Gastrocnemius medialis (tissue), 4 donors: ENCODE measurements at regions of chr16 and their contacts with region 1.

Region 1: GRCh38 chr16:10918294-10919002 is 23.8 kb downstream of the DEXI start:
- DNase-seq: peak; percentile 89 to 96
- ATAC-seq: peak; percentile 39 to 51
- H3K4me3 ChIP-seq: no peak overlapping the region
- H3K27ac ChIP-seq: peak overlapping the region; percentile 92 to 94 (median 93)
- H3K4me1 ChIP-seq: peaks cover 40 to 45% of the 10 kb centered on the region in 2 donors
- H3K27me3 ChIP-seq: no peaks in the 10 kb centered on the region
- CTCF ChIP-seq: peak; percentile 87 to 97 (median 91)
- POLR2A ChIP-seq: no peak

Region 2: GRCh38 chr16:10521681-10522274 is 396.7 kb before region 1 on chr16:
- in situ Hi-C with region 1: loop called (anchors 5 to 25 kb)
- intact Hi-C with region 1: no loop called
- DNase-seq: peak; percentile 29 to 42
- ATAC-seq: peak; percentile 70 to 86
- H3K4me3 ChIP-seq: no peak overlapping the region
- H3K27ac ChIP-seq: no peak overlapping the region
- H3K4me1 ChIP-seq: no peaks in the 10 kb centered on the region
- H3K27me3 ChIP-seq: no peaks in the 10 kb centered on the region
- CTCF ChIP-seq: peak; percentile 64 to 83 (median 75)
- POLR2A ChIP-seq: no peak

Region 3: GRCh38 chr16:10552998-10553491 is 365.4 kb before region 1 on chr16:
- in situ Hi-C with region 1: no loop called
- intact Hi-C with region 1: no loop called
- DNase-seq: peak in 1 of 2 donors; percentile 33
- ATAC-seq: peak; percentile 41 to 56
- H3K4me3 ChIP-seq: peak overlapping the region; percentile 6 to 33 (median 18)
- H3K27ac ChIP-seq: peak overlapping the region in 3 of 4 donors; percentile 30 to 70 (median 54)
- H3K4me1 ChIP-seq: peaks cover 20 to 27% of the 10 kb centered on the region in 2 donors
- H3K27me3 ChIP-seq: no peaks in the 10 kb centered on the region
- CTCF ChIP-seq: no peak
- POLR2A ChIP-seq: no peak

Region 4: DNA sequence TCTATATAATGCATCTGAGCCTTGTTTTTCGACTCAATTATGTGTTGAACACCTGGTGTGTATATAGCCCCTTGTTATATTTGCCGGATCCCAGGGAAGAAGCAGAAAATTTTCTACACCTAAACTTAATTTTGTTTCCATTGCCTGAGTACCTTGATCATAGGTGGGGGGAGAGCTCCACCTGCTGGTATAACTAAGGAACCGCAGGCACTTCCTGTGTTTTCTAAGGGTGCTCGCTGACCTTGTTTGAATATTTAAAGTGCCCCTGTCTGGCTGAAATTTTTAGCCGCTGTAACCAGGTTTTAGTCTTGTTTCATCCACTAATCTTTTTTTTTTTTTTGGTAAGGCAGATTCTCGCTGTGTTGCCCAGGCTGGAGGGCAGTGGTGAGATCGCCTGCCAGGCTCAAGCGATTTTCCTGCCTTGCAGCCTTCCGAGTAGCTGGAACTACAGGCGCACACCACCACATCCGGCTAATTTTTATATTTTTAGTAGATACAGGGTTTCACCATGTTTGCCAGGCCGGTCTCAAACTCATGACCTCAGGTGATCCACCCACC is 181.3 kb before region 1 on chr16:
- in situ Hi-C with region 1: loop called (anchors 5 to 10 kb)
- intact Hi-C with region 1: loop called (anchors 2 kb)
- DNase-seq: peak; percentile 36 to 63
- ATAC-seq: peak; percentile 49
- H3K4me3 ChIP-seq: peak overlapping the region in 2 of 4 donors; percentile 21 to 44
- H3K27ac ChIP-seq: peak overlapping the region; percentile 84 to 95 (median 88)
- H3K4me1 ChIP-seq: peaks cover 16 to 22% of the 10 kb centered on the region in 2 donors
- H3K27me3 ChIP-seq: no peaks in the 10 kb centered on the region
- CTCF ChIP-seq: peak; percentile 93 to 96 (median 93)
- POLR2A ChIP-seq: no peak

Region 5: DNA sequence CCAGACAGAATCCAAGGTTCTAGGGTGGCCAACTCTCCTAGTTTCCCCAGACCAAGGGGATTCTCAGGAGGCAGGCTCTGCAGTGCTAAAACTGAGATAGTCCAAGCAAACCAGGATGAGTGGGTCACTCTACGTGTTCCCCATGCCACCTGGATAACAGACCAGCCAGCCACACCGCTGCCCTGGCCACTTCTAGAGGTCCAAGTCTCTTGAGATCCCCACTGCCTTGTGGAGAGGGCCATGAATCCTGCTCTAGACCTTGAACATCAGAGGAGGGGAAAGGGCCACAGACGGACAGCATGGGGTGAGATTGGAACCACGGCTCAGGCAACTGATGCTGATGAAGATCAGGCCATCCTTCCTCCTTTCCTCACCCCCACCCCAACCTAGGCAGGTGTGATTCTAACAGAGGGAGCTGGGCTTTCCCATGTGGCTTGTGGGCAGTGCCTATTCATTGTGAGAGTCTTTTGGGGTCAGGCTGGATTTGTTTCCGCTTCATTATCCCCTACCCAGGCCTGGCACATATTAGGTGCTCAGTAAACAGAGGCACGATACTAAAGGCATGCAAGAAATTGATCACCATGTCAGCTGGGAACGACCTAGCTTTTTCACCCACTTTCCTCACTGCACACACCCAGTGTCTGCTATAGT is 83.0 kb before region 1 on chr16:
- in situ Hi-C with region 1: no loop called
- intact Hi-C with region 1: loop called (anchors 10 kb)
- DNase-seq: no peak
- ATAC-seq: no peak
- H3K4me3 ChIP-seq: no peak overlapping the region
- H3K27ac ChIP-seq: no peak overlapping the region
- H3K4me1 ChIP-seq: no peaks in the 10 kb centered on the region
- H3K27me3 ChIP-seq: no peaks in the 10 kb centered on the region
- CTCF ChIP-seq: no peak
- POLR2A ChIP-seq: no peak

Region 6: DNA sequence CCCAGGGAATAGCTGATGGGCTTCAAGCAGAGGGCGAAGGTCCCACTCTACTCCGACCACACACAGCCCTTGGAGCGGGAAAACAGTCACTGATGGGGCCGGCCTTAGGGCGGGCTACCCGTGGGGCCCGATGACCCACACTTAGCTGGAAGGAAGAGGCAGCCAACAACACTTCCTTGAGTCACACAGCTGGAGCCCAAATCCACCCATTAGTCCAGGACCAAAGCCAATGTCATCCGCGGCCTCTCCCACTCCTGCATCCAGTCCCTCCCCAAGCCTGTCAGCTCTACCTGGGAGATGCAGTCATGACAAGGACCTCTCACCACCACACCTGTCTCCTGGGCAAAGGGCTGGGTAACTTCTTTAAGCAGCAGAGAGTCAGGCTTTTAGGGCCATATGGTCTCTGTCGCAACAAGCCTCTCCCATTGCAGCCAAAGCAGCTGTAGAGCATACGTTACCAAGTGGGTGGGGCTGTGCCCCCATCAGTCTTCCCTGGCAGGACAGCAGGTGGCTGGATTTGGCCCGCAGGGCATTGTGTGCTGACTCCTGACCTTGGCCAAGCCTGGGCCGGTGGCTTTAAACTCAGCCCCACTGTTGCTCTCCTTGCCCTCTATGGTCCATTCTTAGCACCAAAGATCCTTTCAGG is 226.8 kb after region 1 on chr16:
- in situ Hi-C with region 1: no loop called
- intact Hi-C with region 1: loop called (anchors 5 kb)
- DNase-seq: peak; percentile 73 to 91
- ATAC-seq: peak; percentile 85 to 94
- H3K4me3 ChIP-seq: no peak overlapping the region
- H3K27ac ChIP-seq: peak overlapping the region; percentile 54 to 73 (median 68)
- H3K4me1 ChIP-seq: peaks cover 31 to 40% of the 10 kb centered on the region in 2 donors
- H3K27me3 ChIP-seq: no peaks in the 10 kb centered on the region
- CTCF ChIP-seq: peak in 1 of 5 experiments; percentile 34
- POLR2A ChIP-seq: peak; percentile 50 to 58